Panc1 (cell line): ENCODE measurements at regions of chr1 and their contacts with region 1.

Region 1: GRCh38 chr1:220733090-220733601 is 15.0 kb upstream of the MTARC2 start:
- DNase-seq: peak; percentile 36
- ATAC-seq: peak; percentile 80
- H3K4me3 ChIP-seq: peak overlapping the region in 1 of 2 experiments; percentile 28; a peak in 1 of 4 replicates
- H3K27ac ChIP-seq: peak overlapping the region; percentile 7; the same call in 1 of the 2 replicates
- H3K4me1 ChIP-seq: peaks cover 15% of the 10 kb centered on the region; the same call in 1 of the 2 replicates
- H3K27me3 ChIP-seq: no peaks in the 10 kb centered on the region
- CTCF ChIP-seq: peak; percentile 88

Region 2: GRCh38 chr1:220690140-220691025 is 42.8 kb before region 1 on chr1 and contains the start of gene C1orf115:
- CTCF ChIA-PET with region 1: interaction called, 15 read pairs
- POLR2A ChIA-PET with region 1: interaction called, 3 read pairs
- in situ Hi-C with region 1: no loop called
- intact Hi-C with region 1: loop called (anchors 5 kb)
- DNase-seq: peak; percentile 17
- ATAC-seq: peak; percentile 97
- H3K4me3 ChIP-seq: peak within 1 kb of the TSS; percentile 50 to 55
- H3K27ac ChIP-seq: no peak within 1 kb of the TSS
- H3K4me1 ChIP-seq: no peaks in the 10 kb centered on the region; the same call in 1 of the 2 replicates
- H3K27me3 ChIP-seq: no peaks in the 10 kb centered on the region; the same call in 1 of the 2 replicates
- CTCF ChIP-seq: peak; percentile 99
- total RNA-seq, gene C1orf115: 3.9 TPM

Region 3: DNA sequence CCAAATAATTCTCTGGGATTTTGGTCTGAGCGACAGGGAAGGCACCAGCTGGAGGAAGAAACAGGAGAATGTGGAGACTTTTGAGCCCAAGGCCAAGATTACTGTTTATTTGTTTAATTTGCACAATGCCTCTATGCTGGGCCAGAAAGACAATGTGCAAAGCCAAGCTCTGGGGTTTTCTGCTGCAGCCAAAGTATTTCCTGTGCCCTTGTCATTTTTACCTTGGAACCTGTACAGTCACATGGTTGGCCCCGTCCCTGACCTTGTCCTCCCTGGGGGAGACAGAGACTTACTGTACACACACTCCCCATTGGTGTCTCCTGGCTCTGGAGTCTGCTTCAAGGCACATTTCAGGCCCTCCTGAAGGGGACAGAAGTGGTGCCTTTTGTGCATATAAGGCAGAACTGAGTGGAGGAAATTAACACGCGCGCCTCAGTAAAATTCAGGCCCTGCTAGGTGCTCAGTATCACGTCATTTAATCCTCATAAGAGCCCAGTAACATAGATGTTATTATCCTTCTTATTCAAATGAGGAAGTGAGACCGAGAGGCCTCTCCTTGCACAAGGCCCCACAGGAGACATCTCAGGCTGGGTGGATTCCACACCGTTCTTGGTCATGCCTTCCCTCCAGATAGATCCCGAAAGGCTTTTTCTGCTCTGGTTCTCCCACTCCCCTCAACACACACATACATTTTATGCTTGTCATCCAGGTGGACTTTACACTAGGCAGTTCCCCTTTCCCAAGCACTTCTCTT is 21.9 kb before region 1 on chr1:
- CTCF ChIA-PET with region 1: interaction called, 8 read pairs
- POLR2A ChIA-PET with region 1: interaction called, 14 read pairs
- in situ Hi-C with region 1: no loop called
- intact Hi-C with region 1: no loop called
- DNase-seq: no peak
- ATAC-seq: no peak
- H3K4me3 ChIP-seq: no peak overlapping the region
- H3K27ac ChIP-seq: no peak overlapping the region
- H3K4me1 ChIP-seq: no peaks in the 10 kb centered on the region
- H3K27me3 ChIP-seq: no peaks in the 10 kb centered on the region
- CTCF ChIP-seq: no peak